Psoas muscle (tissue), 8 donors: ENCODE measurements at regions of chr16 and their contacts with region 1.

Region 1: GRCh38 chr16:1564325-1564724 is 30.9 kb downstream of the TMEM204 start:
- DNase-seq: no peak
- ATAC-seq: peak in 2 of 4 donors; percentile 54 to 67
- H3K4me3 ChIP-seq: no peak overlapping the region
- H3K27ac ChIP-seq: no peak overlapping the region
- H3K4me1 ChIP-seq: no peaks in the 10 kb centered on the region
- H3K27me3 ChIP-seq: no peaks in the 10 kb centered on the region
- CTCF ChIP-seq: peak; percentile 42

Region 2: DNA sequence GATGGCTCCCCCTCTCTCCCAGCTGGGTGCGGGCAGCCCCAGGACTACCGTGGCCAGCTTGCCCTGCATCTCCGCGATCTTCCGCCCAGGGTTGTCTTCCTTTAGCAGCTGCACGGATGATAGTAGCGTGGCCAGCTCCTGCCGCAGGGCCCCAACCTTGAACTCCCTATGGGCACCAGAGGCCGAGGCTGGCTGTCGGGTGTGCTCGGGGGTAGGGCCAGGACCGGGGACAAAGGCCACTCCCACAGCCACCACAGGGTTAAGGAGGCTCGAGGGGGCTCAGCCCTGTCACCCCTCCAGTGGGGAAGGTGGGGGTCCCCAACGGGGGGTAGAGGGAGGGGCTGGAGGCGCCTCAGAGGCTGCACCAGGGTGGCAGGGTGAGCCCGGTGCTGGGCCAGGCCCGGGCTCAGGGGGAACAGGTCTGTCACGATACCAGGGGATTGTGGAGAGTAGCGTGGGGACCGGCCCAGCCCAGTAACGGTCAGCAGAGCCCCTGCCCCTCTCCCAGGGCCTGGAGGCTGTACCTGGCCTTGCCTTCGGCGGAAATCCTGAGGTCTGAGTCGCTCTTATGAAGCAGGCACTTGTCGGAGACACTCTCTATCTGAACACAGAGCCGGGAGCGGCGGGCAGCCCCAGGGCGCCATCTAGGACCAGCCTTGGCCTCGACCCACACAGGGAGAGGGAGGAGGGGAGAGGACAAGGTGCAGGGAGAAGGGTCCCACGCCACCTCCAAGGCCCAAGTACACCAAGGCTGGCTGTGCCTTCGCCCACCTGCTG is 128.2 kb before region 1 on chr16:
- intact Hi-C with region 1: loop called in 1 of 2 experiments (anchors 2 kb)
- DNase-seq: no peak
- ATAC-seq: no peak
- H3K4me3 ChIP-seq: no peak overlapping the region
- H3K27ac ChIP-seq: no peak overlapping the region
- H3K4me1 ChIP-seq: no peaks in the 10 kb centered on the region
- H3K27me3 ChIP-seq: no peaks in the 10 kb centered on the region
- CTCF ChIP-seq: no peak